ENCODE measurements at regions of chr1 and their contacts with region 1.

Region 1: DNA sequence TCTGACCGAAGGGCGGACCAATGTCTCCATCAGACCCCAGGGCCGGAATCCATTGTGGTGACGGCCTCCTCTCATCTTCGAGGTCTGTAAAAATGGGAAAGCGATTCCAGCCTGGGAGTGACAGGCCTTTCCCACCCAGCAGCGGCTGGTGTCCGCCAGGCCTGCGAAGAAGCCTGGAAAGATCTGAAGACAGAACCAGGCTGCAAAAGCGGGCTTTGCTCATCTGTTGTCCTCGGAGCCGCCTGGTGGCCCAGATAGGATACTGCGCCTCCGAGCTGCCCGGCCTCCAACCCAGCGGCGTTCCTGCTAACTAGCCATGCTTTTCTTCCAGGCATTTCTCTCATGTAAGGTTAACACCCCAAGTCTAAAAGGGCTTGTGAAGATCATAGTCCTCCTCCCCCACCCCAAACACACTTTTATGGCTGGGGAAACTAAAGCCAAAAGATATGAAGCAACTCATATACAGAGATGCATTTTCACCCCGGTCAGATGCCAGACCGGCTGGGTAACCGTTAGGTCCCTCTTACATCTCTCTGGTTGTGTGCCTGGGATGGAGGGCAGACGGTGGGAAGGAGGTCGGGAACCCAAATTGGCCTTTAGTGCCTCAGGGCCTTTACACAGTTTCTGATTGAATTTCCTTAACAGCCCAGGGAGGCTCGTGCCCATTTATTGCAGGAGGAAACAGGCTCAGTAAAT is 1.9 kb upstream of the DHRS3 start:
- H3K4me3 Mint-ChIP-seq: peak overlapping the region; percentile 20
- H3K27ac Mint-ChIP-seq: no peak overlapping the region
- H3K4me1 Mint-ChIP-seq: peaks cover 51% of the 10 kb centered on the region
- H3K27me3 Mint-ChIP-seq: peaks cover 42% of the 10 kb centered on the region

Region 2: GRCh38 chr1:12344596-12345349 is 275.2 kb before region 1 on chr1:
- intact Hi-C with region 1: loop called (anchors 10 kb)
- H3K4me3 Mint-ChIP-seq: peak overlapping the region; percentile 71
- H3K27ac Mint-ChIP-seq: peak overlapping the region; percentile 80
- H3K4me1 Mint-ChIP-seq: peaks cover 32% of the 10 kb centered on the region
- H3K27me3 Mint-ChIP-seq: no peaks in the 10 kb centered on the region

Region 3: GRCh38 chr1:12407050-12407961 is 212.6 kb before region 1 on chr1:
- intact Hi-C with region 1: loop called (anchors 10 kb)
- H3K4me3 Mint-ChIP-seq: no peak overlapping the region
- H3K27ac Mint-ChIP-seq: no peak overlapping the region
- H3K4me1 Mint-ChIP-seq: peaks cover 36% of the 10 kb centered on the region
- H3K27me3 Mint-ChIP-seq: no peaks in the 10 kb centered on the region

Region 4: GRCh38 chr1:12549460-12550349 is 70.2 kb before region 1 on chr1:
- intact Hi-C with region 1: loop called (anchors 5 kb)
- H3K4me3 Mint-ChIP-seq: no peak overlapping the region
- H3K27ac Mint-ChIP-seq: no peak overlapping the region
- H3K4me1 Mint-ChIP-seq: no peaks in the 10 kb centered on the region
- H3K27me3 Mint-ChIP-seq: no peaks in the 10 kb centered on the region

Region 5: DNA sequence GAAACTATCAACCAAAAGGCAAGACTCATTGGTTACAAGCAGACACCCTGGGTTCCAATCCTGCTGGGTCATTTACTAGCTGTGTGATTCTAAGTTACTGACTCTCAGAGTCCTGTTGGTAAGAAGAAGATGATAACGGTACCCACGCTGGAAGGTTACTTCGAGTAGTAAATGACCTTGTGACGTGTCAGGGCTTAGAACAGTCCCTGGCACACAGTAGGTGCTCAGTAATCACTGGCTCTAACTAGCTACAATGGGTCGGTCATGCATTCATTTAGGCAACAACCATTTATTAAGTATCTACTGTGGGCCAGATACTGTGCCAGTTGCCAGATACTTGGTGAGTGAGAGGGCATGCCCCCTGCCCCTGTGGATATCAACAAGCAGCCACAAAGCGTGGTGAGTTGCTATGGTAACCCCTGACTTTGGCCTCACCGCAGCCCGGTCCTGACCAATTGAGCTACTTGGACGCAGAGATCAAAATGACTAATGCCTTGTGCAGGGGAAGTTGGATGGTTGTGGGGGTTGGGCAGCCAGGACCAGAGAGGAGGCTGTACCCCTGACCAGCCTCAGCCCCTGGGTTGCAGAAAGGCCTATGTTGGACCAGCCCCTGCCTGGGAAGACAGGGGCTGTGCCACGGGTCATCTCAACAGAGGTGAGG is 18.1 kb before region 1 on chr1:
- intact Hi-C with region 1: loop called (anchors 1 kb)
- H3K4me3 Mint-ChIP-seq: no peak overlapping the region
- H3K27ac Mint-ChIP-seq: peak overlapping the region; percentile 17
- H3K4me1 Mint-ChIP-seq: peaks cover 60% of the 10 kb centered on the region
- H3K27me3 Mint-ChIP-seq: peaks cover 39% of the 10 kb centered on the region

Region 6: DNA sequence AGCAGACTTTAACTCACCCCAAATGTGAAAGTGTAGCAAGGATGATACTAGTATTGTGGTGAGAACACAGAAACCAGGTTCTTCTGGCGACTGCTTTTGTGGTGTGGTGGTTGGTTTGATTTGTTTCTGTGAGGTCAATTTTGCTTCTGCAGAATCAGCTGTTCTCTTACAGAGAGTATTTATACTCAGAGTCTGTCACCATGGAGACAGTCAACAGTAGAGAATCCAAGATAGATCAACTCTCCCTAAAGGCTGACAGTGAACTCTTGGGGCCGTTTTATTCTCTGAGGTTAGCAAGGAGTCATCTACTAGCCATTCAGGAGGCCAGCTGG is 126.0 kb after region 1 on chr1 and contains the start of gene CFAP107:
- intact Hi-C with region 1: no loop called
- H3K4me3 Mint-ChIP-seq: no peak within 1 kb of the TSS
- H3K27ac Mint-ChIP-seq: no peak within 1 kb of the TSS
- H3K4me1 Mint-ChIP-seq: no peaks in the 10 kb centered on the region
- H3K27me3 Mint-ChIP-seq: peaks cover 5% of the 10 kb centered on the region

Measured in dendritic cell treated with granulocyte-macrophage colony-stimulating factor and Interleukin-4, amounts not matched to agents 40 ng/mL and 50 ng/mL, for 4 days (primary cell).